Lower leg skin (tissue), 4 donors: ENCODE measurements at regions of chr17 and their contacts with region 1.

Region 1: DNA sequence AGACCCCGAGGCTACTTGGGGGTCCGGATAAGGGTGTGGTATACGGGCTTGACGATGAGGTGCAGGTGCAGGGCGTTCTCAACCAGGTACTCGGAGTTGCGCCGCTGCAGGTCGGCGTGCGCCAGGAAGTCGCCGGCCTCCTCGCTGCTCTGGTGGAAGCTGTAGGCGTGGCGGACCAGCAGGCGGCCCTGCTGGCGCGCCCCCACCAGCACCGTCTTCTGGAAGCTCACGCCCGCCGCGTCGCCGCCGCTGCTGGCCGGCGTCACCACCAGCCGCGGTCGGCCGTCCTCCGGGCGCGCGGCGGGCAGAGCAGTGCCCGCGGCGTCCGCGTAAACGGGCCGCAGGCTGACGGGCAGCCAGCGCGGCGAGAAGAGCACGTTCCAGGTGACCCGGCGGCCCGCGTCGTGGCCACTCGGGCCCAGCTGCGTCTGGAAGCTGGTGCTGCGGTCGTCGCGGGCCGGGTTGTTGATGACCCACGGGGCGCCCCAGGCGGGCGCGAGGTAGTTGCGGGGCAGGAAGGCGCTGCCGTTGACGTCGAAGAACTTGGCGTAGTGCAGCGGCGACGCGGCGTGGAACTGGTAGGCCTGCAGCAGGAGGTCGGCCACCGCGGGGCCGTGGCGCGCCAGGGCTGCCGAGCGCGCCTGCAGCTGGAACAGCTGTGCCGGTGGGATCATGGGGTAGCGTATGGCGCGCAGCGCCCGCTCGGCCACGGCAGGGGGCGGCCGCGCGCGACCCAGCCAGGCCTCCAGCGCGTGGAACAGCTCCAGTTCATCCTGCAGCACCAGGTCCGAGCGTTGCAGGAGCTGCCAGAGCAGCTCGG is 4.8 kb downstream of the BTBD17 start:
- DNase-seq: no peak
- H3K4me3 ChIP-seq: no peak overlapping the region
- CTCF ChIP-seq: no peak
- POLR2A ChIP-seq: no peak

Region 2: DNA sequence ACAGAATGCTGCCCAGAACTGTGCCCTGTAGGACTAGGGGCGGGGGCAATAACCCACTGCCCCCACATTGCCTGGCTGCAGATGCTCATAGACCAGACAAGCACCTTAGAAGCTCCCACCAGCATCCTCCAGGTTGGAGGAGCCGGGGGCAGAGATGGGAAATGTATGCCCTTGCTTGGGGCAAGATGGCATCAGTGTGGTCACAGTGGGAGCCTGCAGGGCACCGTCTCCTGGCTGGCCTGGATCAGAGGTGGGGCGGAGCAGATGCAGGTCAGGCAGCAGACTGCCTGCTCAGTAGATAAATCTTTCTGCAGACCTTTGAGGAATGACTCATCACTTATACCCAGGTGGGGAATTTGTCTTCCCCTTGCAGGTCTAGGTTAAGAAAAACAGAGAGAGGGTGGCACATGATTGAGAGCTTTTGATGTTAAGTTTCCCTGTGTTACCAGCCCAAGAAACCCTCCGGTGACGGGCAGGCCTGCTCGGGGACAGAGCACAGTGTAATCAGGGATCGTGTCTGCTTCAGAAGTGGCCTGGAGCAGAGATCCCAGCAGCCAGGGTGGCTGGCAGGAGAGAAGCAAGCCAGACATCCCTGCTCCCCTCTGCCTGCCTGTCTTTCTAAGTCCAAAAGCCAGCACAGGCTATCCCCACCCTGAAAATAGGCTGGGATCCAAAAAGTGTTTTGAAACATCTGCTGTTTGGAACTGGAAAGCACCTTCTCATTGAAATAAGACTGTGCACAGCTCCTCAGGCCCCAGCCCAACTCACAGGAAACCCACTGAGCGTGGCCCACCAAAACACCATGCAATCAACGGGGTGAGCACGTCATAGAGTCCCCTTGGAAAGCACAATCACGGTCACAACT is 204.0 kb before region 1 on chr17:
- intact Hi-C with region 1: no loop called
- DNase-seq: peak in 1 of 2 donors; percentile 72
- H3K4me3 ChIP-seq: no peak overlapping the region
- CTCF ChIP-seq: no peak
- POLR2A ChIP-seq: no peak

Region 3: GRCh38 chr17:74305865-74306654 is 50.8 kb before region 1 on chr17:
- intact Hi-C with region 1: loop called (anchors 5 kb)
- DNase-seq: no peak
- H3K4me3 ChIP-seq: no peak overlapping the region
- CTCF ChIP-seq: no peak
- POLR2A ChIP-seq: no peak